Sciatic nerve (tissue), 2 donors: ENCODE measurements at regions of chr17 and their contacts with region 1.

Region 1: GRCh38 chr17:42969001-42969581 is 4.8 kb upstream of the AARSD1 start:
- DNase-seq: no peak
- ATAC-seq: no peak

Region 2: GRCh38 chr17:42002792-42003301 is 966.2 kb before region 1 on chr17:
- intact Hi-C with region 1: loop called (anchors 5 kb)
- DNase-seq: no peak
- ATAC-seq: peak; percentile 60

Region 3: GRCh38 chr17:42527273-42527703 is 441.8 kb before region 1 on chr17:
- intact Hi-C with region 1: no loop called
- DNase-seq: peak; percentile 87
- ATAC-seq: peak; percentile 85